H1 (cell line): ENCODE measurements at regions of chr10 and their contacts with region 1.

Region 1: GRCh38 chr10:18594574-18595156 is 56.7 kb downstream of the NSUN6 start:
- DNase-seq: peak in 1 of 2 experiments; percentile 64
- H3K4me3 ChIP-seq: no peak overlapping the region
- H3K27ac ChIP-seq: no peak overlapping the region
- H3K4me1 ChIP-seq: no peaks in the 10 kb centered on the region
- H3K27me3 ChIP-seq: no peaks in the 10 kb centered on the region
- CTCF ChIP-seq: peak; percentile 73 to 82 (median 77)
- EP300 ChIP-seq: no peak
- POLR2A ChIP-seq: no peak
- RAD21 ChIP-seq: peak; percentile 35 to 37

Region 2: GRCh38 chr10:18508587-18508986 is 86.1 kb before region 1 on chr10:
- CTCF ChIA-PET with region 1: no interaction called
- POLR2A ChIA-PET with region 1: no interaction called
- DNase-seq: no peak
- H3K4me3 ChIP-seq: no peak overlapping the region
- H3K27ac ChIP-seq: no peak overlapping the region
- H3K4me1 ChIP-seq: no peaks in the 10 kb centered on the region
- H3K27me3 ChIP-seq: no peaks in the 10 kb centered on the region
- CTCF ChIP-seq: no peak
- EP300 ChIP-seq: no peak
- POLR2A ChIP-seq: no peak
- RAD21 ChIP-seq: no peak

Region 3: GRCh38 chr10:18583575-18584270 is 10.9 kb before region 1 on chr10:
- CTCF ChIA-PET with region 1: interaction called, 10 read pairs
- POLR2A ChIA-PET with region 1: no interaction called
- DNase-seq: no peak
- H3K4me3 ChIP-seq: no peak overlapping the region
- H3K27ac ChIP-seq: no peak overlapping the region
- H3K4me1 ChIP-seq: peaks cover 0 to 3% (median 0%) of the 10 kb centered on the region in 4 experiments; a peak in 1 of 7 replicates
- H3K27me3 ChIP-seq: no peaks in the 10 kb centered on the region
- CTCF ChIP-seq: peak in 2 of 3 experiments; percentile 28; a peak in 2 of 4 replicates
- EP300 ChIP-seq: no peak
- POLR2A ChIP-seq: no peak
- RAD21 ChIP-seq: no peak

Region 4: DNA sequence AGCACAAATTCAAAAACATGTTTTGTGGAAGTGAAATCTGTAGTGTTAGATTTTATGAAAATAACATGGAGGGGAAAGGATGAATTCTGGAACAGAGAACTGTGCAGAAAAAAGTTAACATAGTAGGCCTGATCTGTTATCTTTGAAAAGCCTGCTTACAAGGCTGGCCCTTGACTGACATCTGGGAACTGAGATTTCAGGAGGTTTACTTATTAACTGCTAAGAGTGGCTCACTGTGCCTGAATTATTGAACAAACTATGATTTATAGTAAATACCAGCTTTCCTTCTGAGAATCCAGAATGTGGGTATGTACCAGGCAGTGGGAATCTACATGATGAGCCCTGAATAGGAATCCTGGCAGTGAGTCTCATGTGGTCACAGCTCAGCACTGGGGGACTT is 26.2 kb after region 1 on chr10:
- CTCF ChIA-PET with region 1: no interaction called
- POLR2A ChIA-PET with region 1: no interaction called
- DNase-seq: no peak
- H3K4me3 ChIP-seq: no peak overlapping the region
- H3K27ac ChIP-seq: no peak overlapping the region
- H3K4me1 ChIP-seq: no peaks in the 10 kb centered on the region
- H3K27me3 ChIP-seq: no peaks in the 10 kb centered on the region
- CTCF ChIP-seq: no peak
- EP300 ChIP-seq: no peak
- POLR2A ChIP-seq: no peak
- RAD21 ChIP-seq: no peak